ENCODE measurements at regions of chr9 and their contacts with region 1.

Region 1: GRCh38 chr9:105414947-105415661 is 32.7 kb upstream of the FSD1L start:
- ATAC-seq: peak; percentile 45 to 93 (median 89)
- H3K4me3 ChIP-seq: peak overlapping the region in 3 of 5 donors; percentile 17 to 21 (median 20)
- H3K27ac ChIP-seq: no peak overlapping the region
- H3K4me1 ChIP-seq: peaks cover 2 to 7% of the 10 kb centered on the region in 2 donors

Region 2: GRCh38 chr9:104780799-104781395 is 634.2 kb before region 1 on chr9:
- in situ Hi-C with region 1: loop called in 2 of 9 experiments (anchors 25 kb)
- ATAC-seq: peak in 1 of 8 experiments; percentile 58
- H3K4me3 ChIP-seq: no peak overlapping the region
- H3K27ac ChIP-seq: no peak overlapping the region
- H3K4me1 ChIP-seq: no peaks in the 10 kb centered on the region

Region 3: GRCh38 chr9:104863180-104863883 is 551.8 kb before region 1 on chr9:
- in situ Hi-C with region 1: loop called in 6 of 9 experiments (anchors 25 kb)
- ATAC-seq: peak; percentile 50 to 99 (median 90)
- H3K4me3 ChIP-seq: no peak overlapping the region
- H3K27ac ChIP-seq: no peak overlapping the region
- H3K4me1 ChIP-seq: peaks cover under 1 to 6% of the 10 kb centered on the region in 2 donors

Region 4: GRCh38 chr9:104927912-104928740 is 487.0 kb before region 1 on chr9 and contains the start of gene ABCA1:
- in situ Hi-C with region 1: loop called in 1 of 9 experiments (anchors 10 kb)
- ATAC-seq: peak; percentile 55 to 76 (median 72)
- H3K4me3 ChIP-seq: peak within 1 kb of the TSS; percentile 37 to 86 (median 61)
- H3K27ac ChIP-seq: peak within 1 kb of the TSS; percentile 50 to 71
- H3K4me1 ChIP-seq: peaks cover 5 to 14% of the 10 kb centered on the region in 2 donors
- total RNA-seq, gene ABCA1: 9.1 to 103 (median 15.4) TPM

Region 5: GRCh38 chr9:105157130-105157583 is 257.9 kb before region 1 on chr9:
- in situ Hi-C with region 1: loop called in 3 of 9 experiments (anchors 25 kb)
- ATAC-seq: peak; percentile 89 to 95 (median 92)
- H3K4me3 ChIP-seq: no peak overlapping the region
- H3K27ac ChIP-seq: no peak overlapping the region
- H3K4me1 ChIP-seq: peaks cover 3 to 12% of the 10 kb centered on the region in 2 donors

Region 6: DNA sequence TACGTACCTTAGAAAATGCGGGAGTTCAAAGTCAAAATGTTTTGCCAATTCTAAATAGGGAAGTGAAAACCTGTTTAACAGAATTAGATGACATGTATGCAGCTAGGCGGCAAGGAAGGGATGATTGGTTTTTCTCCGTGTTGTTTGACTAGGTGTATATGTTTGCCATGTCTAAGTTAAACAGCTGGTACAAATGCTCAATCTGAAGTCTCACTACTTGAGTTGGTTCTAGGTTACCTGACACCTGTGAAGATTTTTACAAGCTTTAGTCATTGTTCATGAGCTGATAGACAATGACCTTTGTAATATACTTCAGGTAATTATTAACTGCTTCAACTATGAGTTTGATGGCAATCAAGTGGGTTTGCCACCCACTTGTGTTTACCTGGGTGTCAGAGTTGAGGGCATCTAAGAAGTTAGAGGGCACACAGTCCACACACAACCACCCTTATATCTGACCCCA is 96.3 kb before region 1 on chr9:
- in situ Hi-C with region 1: no loop called
- ATAC-seq: no peak
- H3K4me3 ChIP-seq: no peak overlapping the region
- H3K27ac ChIP-seq: no peak overlapping the region
- H3K4me1 ChIP-seq: no peaks in the 10 kb centered on the region

Measured in motor neuron (in vitro differentiated cells).